GM13977 (cell line): ENCODE measurements at regions of chr12 and their contacts with region 1.

Region 1: DNA sequence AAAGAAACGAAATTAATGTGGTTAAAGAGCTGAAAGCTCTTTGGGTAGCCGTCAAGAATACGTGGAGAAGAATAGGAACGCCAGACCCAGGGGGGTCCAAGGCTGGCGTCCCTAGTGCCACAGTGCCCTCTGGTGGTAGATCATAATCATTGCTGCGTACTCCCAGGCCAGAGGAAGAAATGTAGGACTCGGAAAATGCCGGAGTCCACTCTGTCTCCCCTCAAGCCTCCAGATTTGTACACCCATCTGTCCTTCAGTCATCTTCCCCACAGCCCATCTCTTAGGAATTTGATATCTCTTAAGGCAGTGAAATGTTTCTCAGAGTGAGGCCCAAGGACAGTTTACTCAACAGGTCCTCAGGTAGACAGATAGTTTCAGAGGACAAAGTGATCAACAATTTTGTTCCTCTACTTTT is 25.4 kb upstream of the PLEKHG6 start:
- DNase-seq: peak; percentile 87
- CTCF ChIP-seq: peak; percentile 85

Region 2: DNA sequence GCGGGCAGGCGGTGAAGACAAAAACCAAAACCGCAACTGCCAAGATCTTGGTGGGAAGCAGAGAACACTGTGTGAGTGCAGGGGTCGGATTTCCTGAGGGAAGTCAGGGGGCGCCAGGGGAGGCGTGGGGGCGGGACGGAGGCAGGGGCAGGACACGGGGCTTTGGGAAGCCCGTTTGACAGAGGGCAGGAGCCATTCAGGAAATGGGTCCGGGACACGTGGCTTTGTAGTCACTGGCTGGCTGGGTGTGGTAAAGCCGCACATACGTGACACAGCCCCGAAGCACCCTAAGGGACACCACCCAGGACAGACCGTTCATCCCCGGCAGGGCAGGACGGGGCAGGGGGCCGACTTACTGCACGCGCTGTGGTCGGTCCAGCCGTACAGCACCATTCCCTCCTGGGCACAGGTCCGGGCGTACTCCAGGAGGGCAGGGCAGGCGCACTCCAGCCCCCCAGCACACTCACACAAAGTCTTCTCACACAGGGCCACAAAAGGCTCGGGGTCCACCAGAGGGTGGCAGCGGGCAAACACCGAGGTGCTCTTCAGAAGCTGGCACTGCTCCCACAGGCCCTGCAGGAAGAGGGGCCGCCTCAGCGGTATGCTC is 210.0 kb before region 1 on chr12:
- in situ Hi-C with region 1: loop called (anchors 5 kb)
- DNase-seq: peak; percentile 44
- CTCF ChIP-seq: peak; percentile 25

Region 3: DNA sequence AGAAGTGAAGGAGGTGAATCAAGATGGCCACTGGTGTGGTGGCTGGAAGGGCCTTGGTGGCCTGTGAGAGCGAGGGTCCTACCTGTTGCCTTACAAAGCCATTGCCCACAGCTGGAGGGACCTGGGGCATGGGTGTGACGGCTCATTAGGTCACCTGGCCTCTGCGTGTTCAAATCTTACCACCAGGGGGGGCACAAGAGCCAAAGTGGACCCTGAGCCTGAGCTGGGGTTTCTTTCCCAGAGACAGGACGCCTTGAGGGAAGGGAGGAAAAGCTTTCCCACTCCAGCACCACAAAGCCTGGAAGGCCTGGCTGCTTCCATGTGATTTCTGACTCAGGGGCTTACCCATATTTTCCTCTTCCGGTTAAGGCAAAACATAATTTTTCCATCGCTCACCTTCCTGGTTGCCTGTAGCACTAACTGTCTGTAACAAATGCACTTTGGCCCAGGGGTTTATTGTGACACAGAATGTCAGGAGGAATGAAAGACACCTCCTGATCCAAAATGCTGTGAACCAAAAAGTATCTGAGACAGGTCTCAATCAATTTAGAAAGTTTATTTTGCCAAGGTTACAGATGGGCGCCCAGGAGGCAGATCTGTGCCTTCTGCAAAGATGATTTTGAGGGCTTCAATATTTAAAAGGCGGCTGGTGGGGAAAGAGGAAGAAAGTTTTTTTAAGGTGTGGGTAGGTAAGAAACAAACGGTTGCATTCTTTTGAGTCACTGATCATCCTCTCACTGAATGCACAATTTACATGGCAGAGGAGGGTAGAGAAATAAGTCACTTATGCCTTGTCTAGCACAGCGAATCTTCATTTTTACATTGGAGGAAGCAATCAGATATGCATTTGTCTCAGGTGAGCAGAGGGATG is 89.2 kb before region 1 on chr12:
- in situ Hi-C with region 1: loop called (anchors 10 kb)
- DNase-seq: peak; percentile 92
- CTCF ChIP-seq: peak; percentile 87

Region 4: GRCh38 chr12:6341417-6342139 is 56.5 kb after region 1 on chr12 and contains the start of gene TNFRSF1A:
- in situ Hi-C with region 1: no loop called
- DNase-seq: peak; percentile 60
- CTCF ChIP-seq: no peak